Panc1 (cell line): ENCODE measurements at regions of chr5 and their contacts with region 1.

Region 1: GRCh38 chr5:5141625-5142532 is 1.7 kb downstream of the ADAMTS16 start:
- DNase-seq: no peak
- ATAC-seq: peak; percentile 57; the same call in 1 of the 2 replicates
- H3K4me3 ChIP-seq: no peak overlapping the region
- H3K27ac ChIP-seq: no peak overlapping the region
- H3K4me1 ChIP-seq: peaks cover 6% of the 10 kb centered on the region
- H3K27me3 ChIP-seq: no peaks in the 10 kb centered on the region; the same call in 1 of the 2 replicates
- CTCF ChIP-seq: peak; percentile 73; the same call in 1 of the 2 replicates

Region 2: GRCh38 chr5:4879693-4880303 is 262.1 kb before region 1 on chr5:
- CTCF ChIA-PET with region 1: no interaction called
- POLR2A ChIA-PET with region 1: no interaction called
- in situ Hi-C with region 1: no loop called
- intact Hi-C with region 1: loop called (anchors 2 kb)
- DNase-seq: peak; percentile 66
- ATAC-seq: peak; percentile 89
- H3K4me3 ChIP-seq: no peak overlapping the region
- H3K27ac ChIP-seq: no peak overlapping the region
- H3K4me1 ChIP-seq: no peaks in the 10 kb centered on the region
- H3K27me3 ChIP-seq: peaks cover 2% of the 10 kb centered on the region; the same call in 1 of the 2 replicates
- CTCF ChIP-seq: peak; percentile 98

Region 3: GRCh38 chr5:5398046-5398445 is 256.2 kb after region 1 on chr5:
- CTCF ChIA-PET with region 1: no interaction called
- POLR2A ChIA-PET with region 1: no interaction called
- in situ Hi-C with region 1: no loop called
- intact Hi-C with region 1: loop called (anchors 1 kb)
- DNase-seq: no peak
- ATAC-seq: no peak
- H3K4me3 ChIP-seq: no peak overlapping the region
- H3K27ac ChIP-seq: no peak overlapping the region
- H3K4me1 ChIP-seq: no peaks in the 10 kb centered on the region
- H3K27me3 ChIP-seq: no peaks in the 10 kb centered on the region
- CTCF ChIP-seq: no peak

Region 4: GRCh38 chr5:5419294-5420210 is 277.7 kb after region 1 on chr5:
- CTCF ChIA-PET with region 1: interaction called, 8 read pairs
- POLR2A ChIA-PET with region 1: no interaction called
- in situ Hi-C with region 1: no loop called
- intact Hi-C with region 1: loop called (anchors 1 kb)
- DNase-seq: peak; percentile 65
- ATAC-seq: no peak
- H3K4me3 ChIP-seq: no peak overlapping the region
- H3K27ac ChIP-seq: no peak overlapping the region
- H3K4me1 ChIP-seq: peaks cover 27% of the 10 kb centered on the region
- H3K27me3 ChIP-seq: no peaks in the 10 kb centered on the region
- CTCF ChIP-seq: peak; percentile 87